ENCODE measurements at regions of chr13 and their contacts with region 1.

Region 1: GRCh38 chr13:50094615-50095293 is 79.5 kb downstream of the KCNRG start:
- DNase-seq: no peak
- ATAC-seq: no peak
- H3K4me3 ChIP-seq: no peak overlapping the region
- H3K4me3 Mint-ChIP-seq: no peak overlapping the region
- H3K27ac ChIP-seq: no peak overlapping the region
- H3K27ac Mint-ChIP-seq: no peak overlapping the region
- H3K4me1 ChIP-seq: peaks cover 21 to 31% of the 10 kb centered on the region in 2 donors
- H3K4me1 Mint-ChIP-seq: peaks cover 23% of the 10 kb centered on the region
- H3K27me3 ChIP-seq: no peaks in the 10 kb centered on the region
- H3K27me3 Mint-ChIP-seq: no peaks in the 10 kb centered on the region
- CTCF ChIP-seq: no peak

Region 2: DNA sequence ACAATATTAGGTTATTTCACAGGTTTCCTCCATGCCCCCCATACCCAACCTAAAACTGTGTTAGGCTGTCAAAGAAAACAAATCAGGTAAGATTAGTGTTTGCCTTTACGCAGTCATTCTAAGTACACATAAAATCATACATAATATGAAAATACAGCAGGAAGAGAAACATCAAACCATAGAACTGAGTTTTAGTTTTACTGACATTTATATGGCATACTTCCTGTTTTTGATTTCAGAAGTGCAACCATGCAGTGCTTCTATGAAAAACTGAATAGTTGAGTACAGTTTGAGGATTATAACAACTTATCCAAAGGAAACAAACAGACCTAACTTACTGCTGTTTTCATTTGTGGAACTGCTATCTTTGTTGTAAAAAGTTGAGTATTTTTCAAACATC is 11.8 kb after region 1 on chr13:
- CTCF ChIA-PET with region 1: interaction called, 3 read pairs
- POLR2A ChIA-PET with region 1: interaction called, 15 read pairs
- intact Hi-C with region 1: loop called (anchors 1 kb)
- DNase-seq: peak; percentile 61
- ATAC-seq: peak; percentile 81
- H3K4me3 ChIP-seq: peak overlapping the region in 4 of 5 experiments; percentile 15 to 42 (median 26)
- H3K4me3 Mint-ChIP-seq: peak overlapping the region; percentile 77
- H3K27ac ChIP-seq: peak overlapping the region; percentile 59 to 89
- H3K27ac Mint-ChIP-seq: peak overlapping the region; percentile 92
- H3K4me1 ChIP-seq: peaks cover 49 to 68% of the 10 kb centered on the region in 2 donors
- H3K4me1 Mint-ChIP-seq: peaks cover 60% of the 10 kb centered on the region
- H3K27me3 ChIP-seq: no peaks in the 10 kb centered on the region
- H3K27me3 Mint-ChIP-seq: no peaks in the 10 kb centered on the region
- CTCF ChIP-seq: no peak